HepG2 (cell line): ENCODE measurements at regions of chr17 and their contacts with region 1.

Region 1: GRCh38 chr17:29180034-29180787 is at the start of gene MYO18A:
- DNase-seq: peak; percentile 45
- ATAC-seq: peak; percentile 64
- H3K4me3 ChIP-seq: peak within 1 kb of the TSS; percentile 68 to 88 (median 86)
- H3K27ac ChIP-seq: peak within 1 kb of the TSS; percentile 98
- H3K4me1 ChIP-seq: peaks cover 37% of the 10 kb centered on the region
- H3K27me3 ChIP-seq: no peaks in the 10 kb centered on the region; a peak in 1 of 5 replicates
- CTCF ChIP-seq: peak; percentile 88
- EP300 ChIP-seq: no peak
- POLR2A ChIP-seq: no peak
- RAD21 ChIP-seq: peak; percentile 96
- total RNA-seq, gene MYO18A: 21.2 and 24.8 TPM in 2 replicates

Region 2: DNA sequence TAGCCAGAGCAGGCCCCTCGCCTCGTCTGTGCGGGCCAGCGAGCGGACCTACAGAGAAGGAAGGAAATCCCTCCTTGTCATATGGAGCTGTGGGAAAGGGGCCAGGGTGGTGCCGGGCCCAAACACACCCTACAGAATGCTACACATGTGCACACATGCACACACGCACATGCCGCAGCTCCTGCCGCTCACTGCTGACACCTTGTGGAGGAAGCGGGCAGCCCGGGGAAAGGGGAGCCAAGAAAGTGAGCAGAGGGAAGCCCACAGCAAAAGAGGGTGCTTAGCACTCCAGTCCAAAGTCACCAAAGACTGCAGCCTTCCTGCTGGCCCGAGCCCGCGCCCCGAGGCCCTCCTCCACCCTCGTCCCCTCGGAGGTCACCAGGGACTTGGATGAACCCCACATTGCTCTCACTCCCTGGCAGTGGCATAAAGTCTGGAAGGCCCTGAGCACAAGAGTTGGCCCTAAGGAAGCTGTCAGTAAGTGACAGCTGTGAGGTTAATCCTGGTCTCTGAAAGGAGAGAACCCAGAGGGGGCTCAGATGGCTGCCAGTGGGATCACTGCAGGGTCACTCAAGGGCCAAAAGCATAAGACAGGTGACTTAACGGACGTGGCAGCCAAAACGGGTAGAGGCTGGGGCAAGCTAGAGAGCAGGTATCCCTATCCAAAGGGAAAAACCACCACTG is 68.3 kb before region 1 on chr17:
- CTCF ChIA-PET with region 1: no interaction called
- POLR2A ChIA-PET with region 1: no interaction called
- in situ Hi-C with region 1: no loop called
- intact Hi-C with region 1: no loop called
- DNase-seq: peak; percentile 41
- ATAC-seq: peak; percentile 74
- H3K4me3 ChIP-seq: no peak overlapping the region
- H3K27ac ChIP-seq: no peak overlapping the region
- H3K4me1 ChIP-seq: peaks cover 16% of the 10 kb centered on the region
- H3K27me3 ChIP-seq: no peaks in the 10 kb centered on the region
- CTCF ChIP-seq: peak; percentile 95
- EP300 ChIP-seq: no peak
- POLR2A ChIP-seq: no peak
- RAD21 ChIP-seq: peak; percentile 80

Region 3: GRCh38 chr17:29148790-29149430 is 31.3 kb before region 1 on chr17:
- CTCF ChIA-PET with region 1: interaction called, 40 read pairs
- POLR2A ChIA-PET with region 1: interaction called, 618 read pairs
- in situ Hi-C with region 1: loop called (anchors 5 kb)
- intact Hi-C with region 1: loop called (anchors 1 kb)
- DNase-seq: peak; percentile 87
- ATAC-seq: peak; percentile 93
- H3K4me3 ChIP-seq: peak overlapping the region; percentile 25 to 55 (median 43); a peak in 5 of 6 replicates
- H3K27ac ChIP-seq: peak overlapping the region; percentile 64
- H3K4me1 ChIP-seq: peaks cover 81% of the 10 kb centered on the region
- H3K27me3 ChIP-seq: no peaks in the 10 kb centered on the region
- CTCF ChIP-seq: peak; percentile 98
- EP300 ChIP-seq: peak in 1 of 2 experiments; percentile 27; a peak in 1 of 4 replicates
- POLR2A ChIP-seq: peak in 1 of 2 experiments; percentile 33; a peak in 1 of 4 replicates
- RAD21 ChIP-seq: peak; percentile 100

Region 4: GRCh38 chr17:29163563-29163962 is 16.6 kb before region 1 on chr17:
- CTCF ChIA-PET with region 1: no interaction called
- POLR2A ChIA-PET with region 1: interaction called, 618 read pairs
- in situ Hi-C with region 1: no loop called
- intact Hi-C with region 1: no loop called
- DNase-seq: no peak
- ATAC-seq: no peak
- H3K4me3 ChIP-seq: no peak overlapping the region
- H3K27ac ChIP-seq: no peak overlapping the region
- H3K4me1 ChIP-seq: peaks cover 56% of the 10 kb centered on the region
- H3K27me3 ChIP-seq: no peaks in the 10 kb centered on the region
- CTCF ChIP-seq: no peak
- EP300 ChIP-seq: no peak
- POLR2A ChIP-seq: no peak
- RAD21 ChIP-seq: no peak

Region 5: DNA sequence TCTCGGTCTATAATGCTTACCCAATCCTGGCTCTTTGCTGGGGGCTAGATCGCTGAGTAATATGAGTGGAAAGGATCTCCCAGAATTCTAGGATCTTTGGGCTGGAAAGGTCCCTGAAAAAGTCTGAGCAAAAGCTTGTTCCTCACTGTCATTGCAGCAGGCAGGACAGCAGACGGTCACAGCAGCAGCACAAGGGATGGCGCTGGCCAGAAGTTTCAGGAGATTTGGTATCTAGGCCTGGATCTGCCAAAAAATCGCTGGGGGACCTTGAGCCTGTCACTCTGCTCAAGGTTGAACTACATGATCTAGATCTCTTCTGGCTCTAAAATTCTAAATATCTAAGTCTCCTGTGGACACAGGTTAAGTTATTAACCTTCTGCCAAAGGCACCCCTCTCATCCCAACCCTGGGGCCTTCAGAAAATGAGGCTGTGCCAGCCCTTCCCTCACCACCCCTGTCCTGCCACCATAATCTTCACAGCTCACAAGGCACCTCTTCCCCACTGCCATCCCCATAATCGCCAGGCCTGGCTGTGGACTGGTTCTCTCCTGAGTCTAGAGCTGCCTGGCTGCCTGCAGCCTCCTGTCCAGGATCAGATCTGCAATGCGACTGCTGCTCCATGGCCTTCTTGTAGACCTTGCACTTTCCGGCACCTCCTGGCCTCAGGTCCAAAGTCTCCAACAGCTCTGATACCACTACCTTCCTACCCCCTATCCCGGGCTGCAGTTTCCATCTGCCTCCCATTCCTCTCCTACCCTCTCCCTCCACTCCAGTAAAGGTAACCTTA is 10.2 kb before region 1 on chr17:
- CTCF ChIA-PET with region 1: no interaction called
- POLR2A ChIA-PET with region 1: interaction called, 618 read pairs
- in situ Hi-C with region 1: no loop called
- intact Hi-C with region 1: no loop called
- DNase-seq: no peak
- ATAC-seq: peak; percentile 83
- H3K4me3 ChIP-seq: peak overlapping the region in 1 of 3 experiments; percentile 45; a peak in 1 of 6 replicates
- H3K27ac ChIP-seq: peak overlapping the region; percentile 67
- H3K4me1 ChIP-seq: peaks cover 58% of the 10 kb centered on the region
- H3K27me3 ChIP-seq: no peaks in the 10 kb centered on the region
- CTCF ChIP-seq: no peak
- EP300 ChIP-seq: peak in 1 of 2 experiments; percentile 45; a peak in 1 of 4 replicates
- POLR2A ChIP-seq: peak in 1 of 2 experiments; percentile 39; a peak in 2 of 4 replicates
- RAD21 ChIP-seq: no peak; the same call in 1 of the 2 replicates

Region 6: GRCh38 chr17:29219378-29220047 is 39.3 kb after region 1 on chr17:
- CTCF ChIA-PET with region 1: interaction called, 8 read pairs
- POLR2A ChIA-PET with region 1: interaction called, 7 read pairs
- in situ Hi-C with region 1: no loop called
- intact Hi-C with region 1: loop called (anchors 1 kb)
- DNase-seq: peak; percentile 77
- ATAC-seq: peak; percentile 97
- H3K4me3 ChIP-seq: no peak overlapping the region
- H3K27ac ChIP-seq: no peak overlapping the region
- H3K4me1 ChIP-seq: peaks cover 10% of the 10 kb centered on the region
- H3K27me3 ChIP-seq: peaks cover 1 to 8% of the 10 kb centered on the region in 2 experiments; a peak in 3 of 5 replicates
- CTCF ChIP-seq: peak; percentile 91
- EP300 ChIP-seq: no peak
- POLR2A ChIP-seq: no peak
- RAD21 ChIP-seq: peak; percentile 74